GM13977 (cell line): ENCODE measurements at regions of chr7 and their contacts with region 1.

Region 1: DNA sequence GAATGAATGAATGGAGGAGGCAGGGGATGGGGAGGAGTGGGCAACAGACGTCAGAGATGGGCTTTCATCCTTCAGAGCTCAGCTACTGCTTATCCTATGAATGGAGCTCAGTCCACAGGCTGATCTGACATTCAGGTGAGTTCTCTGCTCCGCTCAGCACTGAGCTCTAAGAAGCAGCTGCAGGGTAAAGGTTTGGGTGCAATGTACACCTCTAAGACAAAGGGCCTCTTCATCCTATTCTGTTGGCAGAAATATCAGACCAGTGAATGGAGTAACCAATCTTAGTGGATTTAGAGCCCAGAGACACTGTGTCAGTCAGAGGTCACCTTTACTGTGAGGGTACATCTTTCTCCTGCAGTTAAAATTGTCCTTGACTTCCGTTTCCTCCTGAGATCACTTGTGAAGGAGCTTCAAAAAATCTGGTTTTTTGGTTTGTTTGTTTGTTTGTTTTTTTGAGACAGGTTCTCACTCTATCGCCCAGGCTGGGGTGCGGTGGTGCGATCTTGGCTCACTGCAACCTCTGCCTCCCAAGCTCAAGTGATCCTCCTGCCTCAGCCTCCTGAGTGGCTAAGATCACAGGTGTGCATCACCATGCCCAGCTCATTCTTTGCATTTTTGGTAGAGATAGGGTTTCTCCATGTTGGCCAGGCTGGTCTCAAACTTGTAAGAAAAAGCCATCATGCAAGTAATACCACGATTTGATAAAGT is 5.1 kb upstream of the CCZ1B start:
- DNase-seq: no peak
- CTCF ChIP-seq: no peak

Region 2: GRCh38 chr7:6589829-6590644 is 241.1 kb before region 1 on chr7 and contains the start of gene INTS15:
- in situ Hi-C with region 1: loop called (anchors 25 kb)
- DNase-seq: peak; percentile 95
- CTCF ChIP-seq: peak; percentile 94

Region 3: DNA sequence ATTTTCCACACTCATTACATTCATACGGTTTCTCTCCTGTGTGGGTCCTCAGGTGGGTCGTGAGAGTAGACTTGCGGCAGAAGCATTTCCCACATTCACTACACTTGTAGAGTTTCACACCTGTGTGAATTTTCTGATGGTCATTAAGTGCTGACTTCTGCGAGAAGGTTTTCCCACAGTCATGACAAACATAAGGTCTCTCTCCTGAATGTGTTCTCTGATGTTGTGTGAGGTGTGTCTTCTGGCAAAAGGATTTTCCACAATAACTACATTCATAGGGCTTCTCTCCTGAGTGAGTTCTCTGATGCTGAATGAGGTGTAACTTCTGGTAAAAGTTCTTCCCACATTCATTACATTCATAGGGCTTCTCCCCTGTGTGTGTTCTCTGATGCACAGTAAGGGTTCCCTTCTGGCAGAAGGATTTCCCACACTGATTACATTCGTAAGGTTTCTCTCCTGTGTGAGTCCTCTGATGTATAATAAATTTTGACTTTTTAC is 139.5 kb before region 1 on chr7:
- in situ Hi-C with region 1: no loop called
- DNase-seq: no peak
- CTCF ChIP-seq: no peak

Region 4: GRCh38 chr7:6729492-6730342 is 101.5 kb before region 1 on chr7:
- in situ Hi-C with region 1: loop called (anchors 10 kb)
- DNase-seq: peak; percentile 92
- CTCF ChIP-seq: no peak